AG04449 (cell line): ENCODE measurements at regions of chr6 and their contacts with region 1.

Region 1: GRCh38 chr6:112296122-112296521 is 41.8 kb upstream of the LAMA4 start:
- DNase-seq: no peak
- H3K4me3 ChIP-seq: no peak overlapping the region
- CTCF ChIP-seq: peak; percentile 65

Region 2: GRCh38 chr6:111565326-111566221 is 730.5 kb before region 1 on chr6:
- CTCF ChIA-PET with region 1: no interaction called
- POLR2A ChIA-PET with region 1: no interaction called
- DNase-seq: no peak
- H3K4me3 ChIP-seq: no peak overlapping the region
- CTCF ChIP-seq: no peak

Region 3: GRCh38 chr6:111950661-111951496 is 345.2 kb before region 1 on chr6:
- CTCF ChIA-PET with region 1: no interaction called
- POLR2A ChIA-PET with region 1: no interaction called
- DNase-seq: no peak
- H3K4me3 ChIP-seq: no peak overlapping the region
- CTCF ChIP-seq: no peak

Region 4: GRCh38 chr6:112282221-112282620 is 13.9 kb before region 1 on chr6:
- CTCF ChIA-PET with region 1: interaction called, 63 read pairs
- POLR2A ChIA-PET with region 1: no interaction called
- DNase-seq: peak; percentile 80
- H3K4me3 ChIP-seq: no peak overlapping the region
- CTCF ChIP-seq: peak; percentile 61